ENCODE measurements at regions of chr21 and their contacts with region 1.

Region 1: DNA sequence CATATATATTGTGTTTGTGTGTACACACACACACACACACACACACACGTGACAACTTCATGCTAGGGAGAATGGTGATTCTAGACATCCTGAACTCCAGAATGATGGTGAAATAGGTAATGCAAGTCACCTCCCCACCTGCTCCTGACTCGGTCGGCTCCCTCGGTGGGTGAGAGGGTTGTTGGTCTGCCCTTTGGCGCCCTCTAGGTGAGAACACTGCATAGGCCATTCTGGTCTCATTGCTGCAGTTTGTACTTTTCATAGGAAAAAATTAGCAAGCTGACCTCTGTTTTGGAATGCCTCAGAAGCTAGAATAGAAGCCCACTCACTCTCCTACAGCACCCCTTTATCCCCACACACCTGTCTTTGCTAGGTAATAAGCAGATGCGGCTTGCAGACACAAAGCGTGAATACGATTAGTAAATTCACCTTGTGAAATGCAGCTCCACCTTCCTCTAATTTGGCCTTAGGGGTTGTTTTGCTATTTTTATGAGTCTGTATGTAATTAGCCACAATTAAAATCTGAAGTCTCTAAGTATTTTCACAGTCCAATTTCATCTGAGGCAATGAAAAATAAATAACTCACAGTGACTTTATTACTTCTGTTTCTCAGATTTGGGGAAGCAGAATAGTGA is 130.0 kb upstream of the KCNJ15 start:
- DNase-seq: peak; percentile 1
- ATAC-seq: peak; percentile 77
- H3K4me3 ChIP-seq: no peak overlapping the region
- H3K27ac ChIP-seq: no peak overlapping the region
- H3K4me1 ChIP-seq: no peaks in the 10 kb centered on the region
- H3K27me3 ChIP-seq: no peaks in the 10 kb centered on the region
- CTCF ChIP-seq: peak in 2 of 3 experiments; percentile 56 to 59; a peak in 4 of 6 replicates
- POLR2A ChIP-seq: no peak
- RAD21 ChIP-seq: peak; percentile 26; the same call in 1 of the 2 replicates

Region 2: DNA sequence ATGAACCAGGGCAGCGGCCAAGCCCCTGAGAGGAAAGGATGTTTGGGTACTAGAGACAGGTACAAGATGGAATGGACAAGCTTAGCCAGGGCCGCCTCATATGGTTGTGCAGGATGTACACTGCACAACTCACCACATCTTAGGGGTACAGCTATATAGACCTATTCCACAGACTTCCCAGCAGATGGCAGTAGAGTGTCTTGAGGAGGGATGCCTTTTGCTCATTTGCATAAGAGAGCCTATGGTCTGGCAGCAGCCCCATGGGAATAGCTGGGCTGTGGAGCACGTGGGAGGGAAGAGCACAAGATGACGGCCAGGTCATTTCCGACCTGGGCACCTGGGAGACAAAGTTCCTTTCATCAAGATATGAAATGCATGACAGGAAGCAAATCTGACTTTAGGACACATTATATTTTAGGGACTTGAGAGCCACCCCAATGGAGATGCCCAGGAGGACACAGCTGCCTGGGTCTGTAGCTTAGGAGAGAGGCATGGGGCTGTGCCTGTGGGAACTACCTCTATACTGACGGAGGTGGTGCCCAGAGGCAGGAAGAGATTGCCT is 426.1 kb before region 1 on chr21:
- CTCF ChIA-PET with region 1: interaction called, 9 read pairs
- POLR2A ChIA-PET with region 1: no interaction called
- RAD21 ChIA-PET with region 1: no interaction called
- intact Hi-C with region 1: loop called (anchors 10 kb)
- DNase-seq: peak; percentile 73
- ATAC-seq: peak; percentile 100
- H3K4me3 ChIP-seq: no peak overlapping the region
- H3K27ac ChIP-seq: no peak overlapping the region
- H3K4me1 ChIP-seq: no peaks in the 10 kb centered on the region
- H3K27me3 ChIP-seq: peaks cover 15% of the 10 kb centered on the region; the same call in 1 of the 2 replicates
- CTCF ChIP-seq: peak; percentile 34 to 80 (median 75); a peak in 4 of 6 replicates
- POLR2A ChIP-seq: no peak
- RAD21 ChIP-seq: peak; percentile 60

Region 3: GRCh38 chr21:37711836-37712568 is 414.8 kb before region 1 on chr21:
- CTCF ChIA-PET with region 1: interaction called, 18 read pairs
- POLR2A ChIA-PET with region 1: no interaction called
- RAD21 ChIA-PET with region 1: no interaction called
- intact Hi-C with region 1: loop called (anchors 10 kb)
- DNase-seq: peak; percentile 53
- ATAC-seq: peak; percentile 99
- H3K4me3 ChIP-seq: no peak overlapping the region
- H3K27ac ChIP-seq: no peak overlapping the region
- H3K4me1 ChIP-seq: no peaks in the 10 kb centered on the region
- H3K27me3 ChIP-seq: no peaks in the 10 kb centered on the region
- CTCF ChIP-seq: peak; percentile 32 to 96 (median 82); a peak in 5 of 6 replicates
- POLR2A ChIP-seq: no peak
- RAD21 ChIP-seq: peak; percentile 67

Region 4: GRCh38 chr21:37758982-37759381 is 367.8 kb before region 1 on chr21:
- CTCF ChIA-PET with region 1: interaction called, 3 read pairs
- POLR2A ChIA-PET with region 1: no interaction called
- RAD21 ChIA-PET with region 1: no interaction called
- intact Hi-C with region 1: loop called (anchors 10 kb)
- DNase-seq: no peak
- ATAC-seq: peak; percentile 74
- H3K4me3 ChIP-seq: no peak overlapping the region
- H3K27ac ChIP-seq: no peak overlapping the region
- H3K4me1 ChIP-seq: no peaks in the 10 kb centered on the region
- H3K27me3 ChIP-seq: peaks cover 21% of the 10 kb centered on the region
- CTCF ChIP-seq: peak in 2 of 3 experiments; percentile 53 to 58; a peak in 4 of 6 replicates
- POLR2A ChIP-seq: no peak
- RAD21 ChIP-seq: peak; percentile 37

Region 5: DNA sequence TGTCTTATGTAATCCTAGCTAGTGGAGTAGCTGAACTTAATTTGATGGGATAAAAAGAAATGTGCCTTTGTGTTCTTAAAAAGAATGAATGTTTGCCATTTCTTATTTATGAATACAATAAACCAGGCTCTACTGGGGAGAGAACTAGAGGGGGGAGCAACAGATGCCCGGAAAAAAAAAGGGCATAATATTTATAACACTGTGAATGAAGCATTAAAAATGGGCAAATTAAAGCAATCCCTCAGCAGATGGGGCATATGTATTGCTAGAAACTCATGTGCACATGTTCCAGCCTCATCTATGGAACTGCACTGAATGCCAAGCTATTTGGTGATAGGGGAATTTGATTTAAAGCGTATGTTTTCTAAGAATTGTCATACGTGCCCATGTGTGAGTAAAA is 168.2 kb before region 1 on chr21:
- CTCF ChIA-PET with region 1: no interaction called
- POLR2A ChIA-PET with region 1: no interaction called
- RAD21 ChIA-PET with region 1: no interaction called
- intact Hi-C with region 1: no loop called
- DNase-seq: no peak
- ATAC-seq: no peak
- H3K4me3 ChIP-seq: no peak overlapping the region
- H3K27ac ChIP-seq: no peak overlapping the region
- H3K4me1 ChIP-seq: no peaks in the 10 kb centered on the region
- H3K27me3 ChIP-seq: no peaks in the 10 kb centered on the region
- CTCF ChIP-seq: no peak
- POLR2A ChIP-seq: no peak
- RAD21 ChIP-seq: no peak

Region 6: GRCh38 chr21:38037416-38037815 is 89.4 kb before region 1 on chr21:
- CTCF ChIA-PET with region 1: no interaction called
- POLR2A ChIA-PET with region 1: no interaction called
- RAD21 ChIA-PET with region 1: no interaction called
- intact Hi-C with region 1: no loop called
- DNase-seq: no peak
- ATAC-seq: no peak
- H3K4me3 ChIP-seq: no peak overlapping the region
- H3K27ac ChIP-seq: no peak overlapping the region
- H3K4me1 ChIP-seq: no peaks in the 10 kb centered on the region
- H3K27me3 ChIP-seq: no peaks in the 10 kb centered on the region
- CTCF ChIP-seq: no peak
- POLR2A ChIP-seq: no peak
- RAD21 ChIP-seq: no peak